ENCODE measurements at regions of chr15 and their contacts with region 1.

Region 1: GRCh38 chr15:96330450-96331145 is at the start of gene NR2F2:
- DNase-seq: peak; percentile 52
- H3K4me3 Mint-ChIP-seq: peak within 1 kb of the TSS; percentile 81
- H3K27ac Mint-ChIP-seq: peak within 1 kb of the TSS; percentile 23
- H3K4me1 Mint-ChIP-seq: peaks cover 10% of the 10 kb centered on the region
- H3K27me3 Mint-ChIP-seq: peaks cover 75% of the 10 kb centered on the region
- total RNA-seq, gene NR2F2: not detected in 2 replicates

Region 2: GRCh38 chr15:96053031-96053780 is 277.4 kb before region 1 on chr15:
- intact Hi-C with region 1: loop called (anchors 10 kb)
- DNase-seq: no peak
- H3K4me3 Mint-ChIP-seq: no peak overlapping the region
- H3K27ac Mint-ChIP-seq: no peak overlapping the region
- H3K4me1 Mint-ChIP-seq: peaks cover under 1% of the 10 kb centered on the region
- H3K27me3 Mint-ChIP-seq: peaks cover 40% of the 10 kb centered on the region

Region 3: DNA sequence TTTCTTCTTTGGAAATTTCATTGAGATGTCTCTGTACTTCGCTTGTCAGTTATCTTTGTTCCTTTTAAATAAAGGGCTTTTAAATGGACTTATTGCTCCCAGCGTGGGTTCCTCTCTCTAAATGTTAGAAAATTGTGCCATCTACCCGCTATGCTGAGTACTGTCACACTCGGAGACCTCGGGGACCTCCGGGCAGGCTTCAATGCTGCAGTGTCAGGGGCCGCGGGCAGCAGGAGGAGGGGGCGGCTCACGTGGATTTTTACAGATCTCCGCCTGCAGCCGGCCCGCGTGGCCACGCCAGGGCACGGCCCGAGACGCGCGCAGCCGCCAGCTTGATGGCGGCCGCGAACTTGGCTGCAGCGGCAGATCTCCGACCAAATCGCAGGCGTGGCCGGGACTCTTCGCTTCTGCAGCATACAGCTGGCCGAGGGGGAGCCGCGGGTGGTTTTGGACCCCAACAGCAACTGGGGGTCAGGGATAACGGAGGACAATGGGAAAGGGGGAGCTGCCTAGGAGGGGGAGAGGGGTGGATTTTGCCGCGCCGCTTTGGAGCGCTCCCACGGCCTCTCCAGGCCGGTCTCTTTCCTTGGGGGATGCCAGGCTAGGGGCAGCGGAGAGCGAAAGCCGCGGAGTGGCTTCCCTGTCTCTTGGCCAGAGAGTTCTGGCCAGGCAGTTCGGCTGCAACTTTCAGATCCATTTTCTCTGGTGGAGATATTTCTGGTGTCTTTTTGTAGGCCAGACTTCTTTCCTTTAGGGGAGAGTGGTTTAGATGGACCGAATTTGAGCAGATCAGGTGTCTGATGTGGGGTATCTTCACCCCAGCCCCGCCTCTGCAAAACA is 15.2 kb after region 1 on chr15:
- intact Hi-C with region 1: loop called (anchors 2 kb)
- DNase-seq: no peak
- H3K4me3 Mint-ChIP-seq: no peak overlapping the region
- H3K27ac Mint-ChIP-seq: no peak overlapping the region
- H3K4me1 Mint-ChIP-seq: no peaks in the 10 kb centered on the region
- H3K27me3 Mint-ChIP-seq: peaks cover 95% of the 10 kb centered on the region

Region 4: GRCh38 chr15:96356494-96357455 is 26.2 kb after region 1 on chr15:
- intact Hi-C with region 1: loop called (anchors 2 kb)
- DNase-seq: peak; percentile 74
- H3K4me3 Mint-ChIP-seq: peak overlapping the region; percentile 79
- H3K27ac Mint-ChIP-seq: no peak overlapping the region
- H3K4me1 Mint-ChIP-seq: peaks cover 16% of the 10 kb centered on the region
- H3K27me3 Mint-ChIP-seq: peaks cover 67% of the 10 kb centered on the region

Region 5: GRCh38 chr15:96409215-96410138 is 78.9 kb after region 1 on chr15:
- intact Hi-C with region 1: loop called (anchors 5 kb)
- DNase-seq: no peak
- H3K4me3 Mint-ChIP-seq: no peak overlapping the region
- H3K27ac Mint-ChIP-seq: no peak overlapping the region
- H3K4me1 Mint-ChIP-seq: no peaks in the 10 kb centered on the region
- H3K27me3 Mint-ChIP-seq: peaks cover 72% of the 10 kb centered on the region

Region 6: DNA sequence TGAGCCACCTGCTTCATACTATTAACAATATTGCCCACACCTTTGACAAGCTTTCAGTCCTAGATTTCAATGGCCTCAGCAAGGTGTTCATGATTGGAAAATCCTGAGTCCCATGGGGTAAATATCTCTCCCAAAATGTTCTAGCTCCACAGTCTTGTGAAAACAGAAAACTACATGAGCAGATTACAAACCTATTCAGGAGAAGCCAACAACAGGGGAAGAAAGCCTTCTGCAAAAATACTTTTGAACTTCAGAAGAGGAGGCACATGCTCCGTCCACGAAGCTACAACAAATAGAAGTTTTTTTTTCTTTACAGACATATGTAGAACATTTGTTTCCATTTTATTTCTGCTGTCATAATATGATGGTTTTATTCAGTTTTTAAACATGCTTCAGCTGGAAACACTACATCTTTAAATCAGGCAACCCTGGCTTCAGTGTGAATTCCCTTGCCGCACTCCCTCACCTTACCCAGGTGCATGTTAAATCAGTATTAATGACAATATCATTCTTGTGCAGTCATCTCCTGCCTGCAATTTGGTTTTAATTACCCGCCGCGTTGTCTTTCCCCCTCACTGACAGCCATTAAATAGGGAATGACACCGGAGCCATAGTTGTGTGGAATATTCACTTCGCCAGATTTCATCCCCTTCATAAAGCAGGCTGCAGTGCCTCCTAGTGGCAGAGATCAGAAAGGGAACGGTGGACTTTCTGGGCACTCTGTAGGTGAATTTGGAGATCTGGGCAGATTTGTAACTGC is 904.4 kb after region 1 on chr15:
- intact Hi-C with region 1: loop called (anchors 10 kb)
- DNase-seq: no peak
- H3K4me3 Mint-ChIP-seq: no peak overlapping the region
- H3K27ac Mint-ChIP-seq: no peak overlapping the region
- H3K4me1 Mint-ChIP-seq: no peaks in the 10 kb centered on the region
- H3K27me3 Mint-ChIP-seq: no peaks in the 10 kb centered on the region